Activated naive CD4-positive, alpha-beta T cell treated with anti-CD3 and anti-CD28 coated beads for 36 hours (primary cell): ENCODE measurements at regions of chr2 and their contacts with region 1.

Region 1: GRCh38 chr2:174688079-174688478 is 76.2 kb downstream of the CHRNA1 start:
- DNase-seq: no peak
- H3K4me3 Mint-ChIP-seq: no peak overlapping the region
- H3K27ac Mint-ChIP-seq: no peak overlapping the region
- H3K4me1 Mint-ChIP-seq: peaks cover 22% of the 10 kb centered on the region
- H3K27me3 Mint-ChIP-seq: no peaks in the 10 kb centered on the region

Region 2: GRCh38 chr2:174465327-174465726 is 222.8 kb before region 1 on chr2:
- CTCF ChIA-PET with region 1: interaction called, 56 read pairs
- intact Hi-C with region 1: loop called (anchors 1 kb)
- DNase-seq: no peak
- H3K4me3 Mint-ChIP-seq: no peak overlapping the region
- H3K27ac Mint-ChIP-seq: no peak overlapping the region
- H3K4me1 Mint-ChIP-seq: no peaks in the 10 kb centered on the region
- H3K27me3 Mint-ChIP-seq: no peaks in the 10 kb centered on the region

Region 3: GRCh38 chr2:174568425-174568824 is 119.7 kb before region 1 on chr2:
- CTCF ChIA-PET with region 1: interaction called, 114 read pairs
- intact Hi-C with region 1: loop called (anchors 2 kb)
- DNase-seq: peak; percentile 34
- H3K4me3 Mint-ChIP-seq: no peak overlapping the region
- H3K27ac Mint-ChIP-seq: peak overlapping the region; percentile 81
- H3K4me1 Mint-ChIP-seq: peaks cover 62% of the 10 kb centered on the region
- H3K27me3 Mint-ChIP-seq: no peaks in the 10 kb centered on the region

Region 4: GRCh38 chr2:174593574-174594203 is 94.4 kb before region 1 on chr2:
- CTCF ChIA-PET with region 1: interaction called, 52 read pairs
- intact Hi-C with region 1: no loop called
- DNase-seq: peak; percentile 87
- H3K4me3 Mint-ChIP-seq: peak overlapping the region; percentile 77
- H3K27ac Mint-ChIP-seq: peak overlapping the region; percentile 99
- H3K4me1 Mint-ChIP-seq: peaks cover 52% of the 10 kb centered on the region
- H3K27me3 Mint-ChIP-seq: no peaks in the 10 kb centered on the region

Region 5: GRCh38 chr2:174610243-174610995 is 77.7 kb before region 1 on chr2:
- CTCF ChIA-PET with region 1: interaction called, 87 read pairs
- intact Hi-C with region 1: loop called (anchors 1 kb)
- DNase-seq: peak; percentile 10
- H3K4me3 Mint-ChIP-seq: peak overlapping the region; percentile 2
- H3K27ac Mint-ChIP-seq: peak overlapping the region; percentile 98
- H3K4me1 Mint-ChIP-seq: peaks cover 89% of the 10 kb centered on the region
- H3K27me3 Mint-ChIP-seq: no peaks in the 10 kb centered on the region

Region 6: GRCh38 chr2:174634130-174635014 is 53.7 kb before region 1 on chr2:
- CTCF ChIA-PET with region 1: interaction called, 35 read pairs
- intact Hi-C with region 1: loop called (anchors 1 kb)
- DNase-seq: peak; percentile 79
- H3K4me3 Mint-ChIP-seq: peak overlapping the region; percentile 91
- H3K27ac Mint-ChIP-seq: peak overlapping the region; percentile 99
- H3K4me1 Mint-ChIP-seq: peaks cover 60% of the 10 kb centered on the region
- H3K27me3 Mint-ChIP-seq: no peaks in the 10 kb centered on the region